AG04449 (cell line): ENCODE measurements at regions of chr20 and their contacts with region 1.

Region 1: GRCh38 chr20:9359561-9360308 is 154.7 kb upstream of the LAMP5 start:
- DNase-seq: no peak
- H3K4me3 ChIP-seq: no peak overlapping the region
- CTCF ChIP-seq: no peak

Region 2: DNA sequence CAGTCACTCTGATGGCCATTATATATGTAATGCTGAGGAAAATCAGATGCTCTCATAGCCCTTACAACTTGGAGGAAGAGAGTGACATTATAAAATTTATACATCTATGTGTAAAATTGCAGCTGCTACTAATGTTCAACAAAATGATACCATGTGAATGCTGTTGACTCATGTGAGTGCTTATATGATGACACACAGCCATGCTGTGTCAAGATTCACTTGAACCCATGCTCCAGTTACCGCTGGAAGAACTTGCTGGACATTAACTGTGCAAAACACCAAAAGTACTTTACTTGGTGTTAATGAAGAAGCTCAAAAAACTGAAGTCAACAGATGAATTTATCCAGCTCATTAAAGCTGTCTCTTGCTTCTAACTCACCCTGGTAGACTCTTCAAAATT is 609.7 kb before region 1 on chr20:
- CTCF ChIA-PET with region 1: interaction called, 16 read pairs
- POLR2A ChIA-PET with region 1: no interaction called
- DNase-seq: no peak
- H3K4me3 ChIP-seq: no peak overlapping the region
- CTCF ChIP-seq: no peak

Region 3: DNA sequence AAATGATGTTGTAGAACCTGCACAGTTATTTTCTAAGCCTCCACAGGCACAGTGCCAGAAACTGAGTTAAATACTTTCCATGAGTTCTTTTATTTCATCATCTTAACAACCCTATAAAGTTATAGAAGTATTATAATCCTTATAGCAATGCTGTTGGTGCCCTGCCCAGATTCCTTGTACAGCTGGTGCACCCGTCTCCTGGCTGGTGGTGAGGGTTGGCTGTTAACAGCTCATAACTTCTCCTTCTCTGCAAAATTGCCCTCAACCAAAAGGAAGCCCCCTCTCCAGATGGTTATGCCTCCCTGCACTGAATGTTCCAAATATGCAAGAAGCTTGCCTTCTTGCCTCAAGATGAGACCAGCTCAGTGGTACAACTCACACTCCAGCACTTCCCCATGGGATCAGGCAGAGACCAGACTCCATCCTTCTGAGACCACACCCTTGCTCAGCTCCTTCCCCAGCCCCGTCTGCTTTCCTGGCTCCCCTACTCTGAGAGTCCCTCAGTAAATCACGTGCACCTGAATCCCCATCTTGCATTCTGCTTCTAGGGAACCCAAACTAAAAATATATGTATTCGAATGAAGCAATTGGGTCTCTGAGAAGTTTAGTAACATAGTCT is 595.3 kb before region 1 on chr20:
- CTCF ChIA-PET with region 1: interaction called, 21 read pairs
- POLR2A ChIA-PET with region 1: no interaction called
- DNase-seq: no peak
- H3K4me3 ChIP-seq: no peak overlapping the region
- CTCF ChIP-seq: no peak

Region 4: DNA sequence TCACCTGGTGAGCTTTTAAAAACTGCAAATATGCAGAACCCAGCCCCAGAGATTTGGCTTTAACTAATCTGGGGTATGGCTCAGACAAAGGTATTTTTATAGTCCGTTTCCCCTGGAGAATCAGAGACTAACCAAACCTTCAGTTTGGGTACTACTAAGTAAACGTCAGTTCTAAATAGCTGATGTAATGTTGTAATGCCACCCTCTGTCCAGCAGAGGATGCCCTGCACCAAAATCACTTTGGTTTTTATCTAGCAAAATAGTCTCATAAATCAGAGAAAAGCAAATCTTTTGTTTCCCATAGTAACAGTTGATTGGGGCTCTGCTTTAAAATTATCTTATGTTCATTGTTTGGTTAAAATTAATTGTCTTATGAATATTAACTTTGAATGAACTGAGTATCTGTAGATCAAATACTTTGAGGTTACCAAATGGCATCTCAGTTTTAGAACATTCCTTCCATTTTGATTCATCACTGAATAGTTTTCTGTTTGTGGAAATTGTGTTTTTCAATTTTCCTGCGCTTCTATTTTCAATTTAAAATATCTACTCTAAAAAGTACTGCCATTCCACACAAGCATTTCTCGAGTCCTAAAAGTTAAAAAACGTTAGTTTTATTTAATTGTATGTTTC is 569.2 kb before region 1 on chr20:
- CTCF ChIA-PET with region 1: interaction called, 31 read pairs
- POLR2A ChIA-PET with region 1: no interaction called
- DNase-seq: no peak
- H3K4me3 ChIP-seq: no peak overlapping the region
- CTCF ChIP-seq: peak; percentile 74